Caco-2 (cell line): ENCODE measurements at regions of chr1 and their contacts with region 1.

Region 1: DNA sequence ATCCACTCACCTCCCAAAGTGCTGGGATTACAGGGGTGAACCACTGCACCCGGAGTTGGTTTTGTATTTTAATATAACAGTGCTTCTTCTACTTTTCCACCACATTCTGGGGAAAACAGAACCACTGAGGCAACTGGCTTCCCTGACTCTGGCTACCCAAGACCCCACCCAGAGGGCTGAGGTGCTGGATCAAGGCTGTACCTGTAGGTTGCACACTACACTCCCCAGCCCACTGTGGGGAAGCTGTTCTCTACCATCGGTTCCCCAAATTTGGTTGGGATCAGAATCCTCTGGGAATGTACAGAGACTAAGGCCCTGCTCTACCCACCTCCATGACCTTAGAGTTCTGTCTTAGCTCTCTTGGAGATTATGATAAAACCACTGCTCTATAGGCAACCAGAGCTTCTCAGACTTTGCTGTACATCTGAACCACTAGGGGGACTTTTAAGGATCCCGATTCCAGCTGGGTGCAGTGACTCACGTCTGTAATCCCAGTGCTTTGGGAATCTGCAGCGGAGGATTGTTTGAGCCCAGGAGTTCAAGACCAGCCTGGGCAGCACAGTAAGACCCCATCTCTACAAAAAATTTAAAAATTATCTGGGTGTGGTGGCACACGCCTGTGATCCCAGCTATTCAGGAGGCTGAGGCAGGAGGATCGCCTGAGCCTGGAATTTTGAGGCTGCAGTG is 51.6 kb downstream of the GNG4 start:
- DNase-seq: peak in 1 of 2 experiments; percentile 27
- H3K4me3 ChIP-seq: no peak overlapping the region
- H3K4me3 Mint-ChIP-seq: no peak overlapping the region
- H3K27ac Mint-ChIP-seq: no peak overlapping the region
- H3K4me1 ChIP-seq: no peaks in the 10 kb centered on the region
- H3K4me1 Mint-ChIP-seq: no peaks in the 10 kb centered on the region
- H3K27me3 ChIP-seq: no peaks in the 10 kb centered on the region
- H3K27me3 Mint-ChIP-seq: no peaks in the 10 kb centered on the region
- CTCF ChIP-seq: peak; percentile 54 to 60

Region 2: GRCh38 chr1:235513495-235514366 is 84.3 kb before region 1 on chr1:
- CTCF ChIA-PET with region 1: interaction called, 4 read pairs
- POLR2A ChIA-PET with region 1: no interaction called
- intact Hi-C with region 1: loop called (anchors 5 kb)
- DNase-seq: peak in 1 of 2 experiments; percentile 72
- H3K4me3 ChIP-seq: no peak overlapping the region
- H3K4me3 Mint-ChIP-seq: no peak overlapping the region
- H3K27ac Mint-ChIP-seq: no peak overlapping the region
- H3K4me1 ChIP-seq: no peaks in the 10 kb centered on the region
- H3K4me1 Mint-ChIP-seq: no peaks in the 10 kb centered on the region
- H3K27me3 ChIP-seq: no peaks in the 10 kb centered on the region
- H3K27me3 Mint-ChIP-seq: peaks cover 2% of the 10 kb centered on the region
- CTCF ChIP-seq: peak; percentile 80 to 89

Region 3: DNA sequence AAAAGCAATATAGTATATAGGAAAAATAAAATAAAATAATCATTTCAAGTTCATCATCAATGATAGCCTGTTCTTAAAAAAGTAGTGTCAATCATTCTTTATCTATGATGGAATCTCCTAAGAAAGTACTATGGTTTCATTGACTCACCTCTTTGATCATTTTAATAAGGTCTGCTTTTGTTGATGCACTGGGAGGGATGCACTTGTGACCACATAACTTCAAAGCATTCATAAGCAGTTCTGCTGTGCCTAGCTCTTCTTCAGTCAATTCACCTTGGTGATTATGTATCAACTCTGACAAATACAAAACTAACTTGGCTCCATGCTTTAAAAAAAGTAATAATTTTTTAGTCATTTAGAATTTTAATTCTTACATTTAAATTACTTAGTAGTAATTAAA is 136.3 kb after region 1 on chr1:
- CTCF ChIA-PET with region 1: interaction called, 6 read pairs
- POLR2A ChIA-PET with region 1: no interaction called
- intact Hi-C with region 1: loop called (anchors 1 kb)
- DNase-seq: no peak
- H3K4me3 ChIP-seq: no peak overlapping the region
- H3K4me3 Mint-ChIP-seq: no peak overlapping the region
- H3K27ac Mint-ChIP-seq: no peak overlapping the region
- H3K4me1 ChIP-seq: no peaks in the 10 kb centered on the region
- H3K4me1 Mint-ChIP-seq: no peaks in the 10 kb centered on the region
- H3K27me3 ChIP-seq: no peaks in the 10 kb centered on the region
- H3K27me3 Mint-ChIP-seq: no peaks in the 10 kb centered on the region
- CTCF ChIP-seq: no peak

Region 4: DNA sequence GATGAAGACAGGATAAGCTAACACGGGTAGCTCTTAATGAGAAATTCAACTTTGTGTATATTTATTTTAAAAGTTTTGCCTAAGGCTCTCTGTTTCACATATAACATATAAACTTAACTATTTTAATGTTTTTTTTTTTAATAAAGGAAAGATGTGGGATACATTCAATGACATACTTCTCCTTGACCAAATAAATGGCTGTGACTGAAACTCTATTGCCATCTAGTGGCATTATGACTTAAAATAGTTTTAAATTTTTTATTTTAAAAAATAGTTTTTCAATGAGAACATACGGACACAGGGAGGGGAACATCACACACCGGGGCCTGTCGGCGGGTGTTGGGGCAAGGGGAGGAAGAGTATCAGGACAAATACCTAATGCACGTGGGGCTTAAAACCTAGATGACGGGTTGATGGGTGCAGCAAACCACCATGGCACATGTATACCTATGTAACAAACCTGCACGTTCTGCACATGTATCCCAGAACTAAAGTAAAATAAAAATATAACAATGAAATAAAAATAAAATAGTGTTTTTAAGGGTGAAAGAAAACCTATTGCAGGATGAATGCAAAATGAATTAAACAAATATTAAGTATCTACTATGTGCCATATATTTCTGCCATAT is 185.3 kb after region 1 on chr1:
- CTCF ChIA-PET with region 1: interaction called, 3 read pairs
- POLR2A ChIA-PET with region 1: no interaction called
- intact Hi-C with region 1: loop called (anchors 1 kb)
- DNase-seq: peak in 1 of 2 experiments; percentile 26
- H3K4me3 ChIP-seq: no peak overlapping the region
- H3K4me3 Mint-ChIP-seq: no peak overlapping the region
- H3K27ac Mint-ChIP-seq: no peak overlapping the region
- H3K4me1 ChIP-seq: no peaks in the 10 kb centered on the region
- H3K4me1 Mint-ChIP-seq: no peaks in the 10 kb centered on the region
- H3K27me3 ChIP-seq: no peaks in the 10 kb centered on the region
- H3K27me3 Mint-ChIP-seq: no peaks in the 10 kb centered on the region
- CTCF ChIP-seq: peak; percentile 41 to 62

Region 5: DNA sequence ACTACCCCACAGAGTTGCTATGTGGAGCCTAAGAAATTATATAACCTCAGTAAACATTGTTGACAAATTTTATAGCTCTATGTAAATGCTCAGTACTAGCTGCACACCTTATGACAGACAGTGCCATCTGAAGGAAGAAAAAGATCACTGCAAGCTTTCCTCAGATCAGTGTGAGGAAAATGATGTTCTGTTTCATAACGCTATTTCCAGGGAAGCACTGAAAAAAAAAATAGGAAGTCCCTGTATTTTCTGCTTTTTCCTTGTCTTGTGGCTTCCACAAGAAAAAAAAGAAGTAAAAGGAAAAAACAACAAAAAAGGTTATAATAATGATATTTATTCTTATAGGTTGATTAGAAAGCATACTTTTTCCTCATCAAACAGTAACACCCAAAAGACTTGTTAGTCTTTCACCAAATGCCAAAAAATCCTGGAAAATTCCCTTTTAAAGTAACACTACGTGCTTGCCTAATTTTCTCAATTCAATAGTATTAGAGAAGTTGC is 245.5 kb after region 1 on chr1:
- CTCF ChIA-PET with region 1: interaction called, 11 read pairs
- POLR2A ChIA-PET with region 1: no interaction called
- intact Hi-C with region 1: no loop called
- DNase-seq: peak in 1 of 2 experiments; percentile 35
- H3K4me3 ChIP-seq: no peak overlapping the region
- H3K4me3 Mint-ChIP-seq: no peak overlapping the region
- H3K27ac Mint-ChIP-seq: no peak overlapping the region
- H3K4me1 ChIP-seq: no peaks in the 10 kb centered on the region
- H3K4me1 Mint-ChIP-seq: peaks cover 12% of the 10 kb centered on the region
- H3K27me3 ChIP-seq: no peaks in the 10 kb centered on the region
- H3K27me3 Mint-ChIP-seq: peaks cover 4% of the 10 kb centered on the region
- CTCF ChIP-seq: peak; percentile 55 to 69